ENCODE measurements at regions of chr17 and their contacts with region 1.

Region 1: DNA sequence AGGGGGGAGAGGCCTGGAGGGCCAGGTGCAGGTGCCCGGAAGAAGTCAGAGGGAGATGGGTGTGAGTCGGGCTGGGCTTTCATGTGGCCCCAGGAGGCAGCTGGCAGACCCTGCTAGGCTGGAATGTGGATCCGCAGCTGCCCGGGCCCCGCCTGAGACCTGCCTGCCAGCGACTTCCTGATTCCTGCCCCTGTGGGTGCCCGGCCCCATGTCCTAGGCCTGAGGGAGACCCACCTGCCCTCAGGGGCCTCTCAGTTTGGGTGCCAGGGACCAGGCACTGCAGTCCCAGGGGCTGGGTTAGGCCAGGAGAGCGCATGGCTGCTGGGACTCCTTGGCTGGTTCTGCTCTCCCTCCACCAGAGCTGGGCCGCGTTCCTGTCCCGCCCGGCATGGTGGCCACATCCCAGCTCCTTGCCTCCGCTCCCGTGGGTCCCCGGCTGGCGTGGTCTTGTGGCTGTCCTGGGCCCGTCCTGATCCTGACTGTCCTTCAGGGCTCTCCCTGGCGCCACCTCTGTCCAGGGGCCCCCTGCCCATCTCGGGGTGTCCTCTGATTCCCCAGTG is 22.1 kb upstream of the SPNS2 start:
- DNase-seq: peak; percentile 92 to 96
- H3K4me3 ChIP-seq: peak overlapping the region; percentile 49; the same call in 1 of the 2 replicates
- H3K27ac ChIP-seq: peak overlapping the region; percentile 93
- H3K4me1 ChIP-seq: peaks cover 70% of the 10 kb centered on the region
- H3K27me3 ChIP-seq: no peaks in the 10 kb centered on the region
- CTCF ChIP-seq: no peak

Region 2: GRCh38 chr17:3886776-3887175 is 589.8 kb before region 1 on chr17:
- CTCF ChIA-PET with region 1: no interaction called
- POLR2A ChIA-PET with region 1: no interaction called
- intact Hi-C with region 1: no loop called
- DNase-seq: no peak
- H3K4me3 ChIP-seq: no peak overlapping the region
- H3K27ac ChIP-seq: no peak overlapping the region
- H3K4me1 ChIP-seq: peaks cover 61% of the 10 kb centered on the region
- H3K27me3 ChIP-seq: no peaks in the 10 kb centered on the region
- CTCF ChIP-seq: no peak

Region 3: GRCh38 chr17:4236456-4236855 is 240.1 kb before region 1 on chr17:
- CTCF ChIA-PET with region 1: no interaction called
- POLR2A ChIA-PET with region 1: no interaction called
- intact Hi-C with region 1: no loop called
- DNase-seq: no peak
- H3K4me3 ChIP-seq: no peak overlapping the region
- H3K27ac ChIP-seq: no peak overlapping the region
- H3K4me1 ChIP-seq: no peaks in the 10 kb centered on the region
- H3K27me3 ChIP-seq: no peaks in the 10 kb centered on the region
- CTCF ChIP-seq: no peak

Region 4: DNA sequence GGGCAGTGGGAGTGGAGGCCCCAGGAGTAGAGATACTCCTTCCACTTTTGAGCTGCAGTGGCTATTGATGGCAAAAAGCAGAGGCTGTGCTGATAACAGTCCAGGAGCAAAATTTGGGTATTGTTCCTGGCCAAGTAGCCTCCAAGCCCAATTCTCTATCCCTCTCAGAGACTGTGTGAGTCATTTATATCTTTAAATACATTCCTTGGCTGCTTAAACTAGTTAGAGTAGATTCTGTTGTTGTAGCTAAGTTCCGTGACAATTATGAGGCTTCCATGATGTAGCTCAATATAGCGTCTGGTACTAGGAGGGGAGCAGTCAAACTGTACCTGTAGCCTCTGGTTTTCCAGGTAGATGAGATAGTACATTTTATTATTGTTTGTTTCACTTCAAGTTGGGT is 90.2 kb before region 1 on chr17:
- CTCF ChIA-PET with region 1: no interaction called
- POLR2A ChIA-PET with region 1: no interaction called
- intact Hi-C with region 1: no loop called
- DNase-seq: no peak
- H3K4me3 ChIP-seq: no peak overlapping the region
- H3K27ac ChIP-seq: no peak overlapping the region
- H3K4me1 ChIP-seq: peaks cover 12% of the 10 kb centered on the region
- H3K27me3 ChIP-seq: no peaks in the 10 kb centered on the region
- CTCF ChIP-seq: no peak

Region 5: GRCh38 chr17:4426499-4427208 is 49.9 kb before region 1 on chr17:
- CTCF ChIA-PET with region 1: interaction called, 22 read pairs
- POLR2A ChIA-PET with region 1: no interaction called
- intact Hi-C with region 1: loop called (anchors 2 kb)
- DNase-seq: no peak
- H3K4me3 ChIP-seq: no peak overlapping the region
- H3K27ac ChIP-seq: peak overlapping the region; percentile 50
- H3K4me1 ChIP-seq: 0 out of 2 replicates have a peak, but pooled peaks cover 8% of the 10 kb centered on the region
- H3K27me3 ChIP-seq: no peaks in the 10 kb centered on the region
- CTCF ChIP-seq: no peak

Region 6: DNA sequence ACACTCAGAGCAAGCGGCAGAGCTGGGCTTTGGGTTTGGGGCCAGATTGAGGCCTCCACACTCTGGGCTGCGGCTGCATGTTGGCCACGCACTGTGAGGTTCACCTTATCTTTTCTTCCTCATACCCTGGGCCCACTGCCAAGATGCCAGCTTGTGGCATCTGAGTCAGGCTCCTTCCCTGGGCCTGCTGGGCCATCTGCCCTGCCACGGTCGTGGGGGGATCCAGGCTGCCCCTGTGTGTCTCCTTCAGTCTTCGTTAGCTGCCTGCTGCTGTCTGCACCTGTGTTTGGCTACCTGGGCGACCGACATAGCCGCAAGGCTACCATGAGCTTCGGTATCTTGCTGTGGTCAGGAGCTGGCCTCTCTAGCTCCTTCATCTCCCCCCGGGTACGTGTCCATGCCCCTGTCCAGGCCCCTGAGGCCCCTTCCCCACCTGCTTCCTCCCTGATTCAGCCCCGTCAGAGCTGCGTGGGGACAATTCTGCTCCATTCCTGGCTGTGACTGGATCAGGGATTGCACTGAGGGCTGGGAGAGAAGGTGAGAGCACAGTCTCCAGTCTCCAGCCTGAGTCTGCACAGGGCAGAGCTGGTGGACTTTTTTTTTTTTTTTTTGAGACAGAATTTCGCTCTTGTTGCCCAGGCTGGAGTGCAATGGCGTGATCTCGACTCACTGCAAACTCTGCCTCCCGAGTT is 31.7 kb before region 1 on chr17:
- CTCF ChIA-PET with region 1: no interaction called
- POLR2A ChIA-PET with region 1: interaction called, 4 read pairs
- intact Hi-C with region 1: loop called (anchors 1 kb)
- DNase-seq: peak; percentile 79 to 90
- H3K4me3 ChIP-seq: no peak overlapping the region
- H3K27ac ChIP-seq: no peak overlapping the region
- H3K4me1 ChIP-seq: peaks cover 27% of the 10 kb centered on the region
- H3K27me3 ChIP-seq: no peaks in the 10 kb centered on the region
- CTCF ChIP-seq: no peak

Region 7: GRCh38 chr17:4513995-4514605 is 37.5 kb after region 1 on chr17:
- CTCF ChIA-PET with region 1: no interaction called
- POLR2A ChIA-PET with region 1: no interaction called
- intact Hi-C with region 1: loop called (anchors 1 kb)
- DNase-seq: peak; percentile 92 to 93
- H3K4me3 ChIP-seq: peak overlapping the region; percentile 47; the same call in 1 of the 2 replicates
- H3K27ac ChIP-seq: peak overlapping the region; percentile 100
- H3K4me1 ChIP-seq: peaks cover 79% of the 10 kb centered on the region
- H3K27me3 ChIP-seq: no peaks in the 10 kb centered on the region
- CTCF ChIP-seq: no peak

Region 8: GRCh38 chr17:4520894-4521600 is 44.5 kb after region 1 on chr17:
- CTCF ChIA-PET with region 1: no interaction called
- POLR2A ChIA-PET with region 1: interaction called, 5 read pairs
- intact Hi-C with region 1: loop called (anchors 1 kb)
- DNase-seq: peak; percentile 89 to 93
- H3K4me3 ChIP-seq: no peak overlapping the region
- H3K27ac ChIP-seq: peak overlapping the region; percentile 87
- H3K4me1 ChIP-seq: peaks cover 54% of the 10 kb centered on the region
- H3K27me3 ChIP-seq: no peaks in the 10 kb centered on the region
- CTCF ChIP-seq: no peak

Region 9: DNA sequence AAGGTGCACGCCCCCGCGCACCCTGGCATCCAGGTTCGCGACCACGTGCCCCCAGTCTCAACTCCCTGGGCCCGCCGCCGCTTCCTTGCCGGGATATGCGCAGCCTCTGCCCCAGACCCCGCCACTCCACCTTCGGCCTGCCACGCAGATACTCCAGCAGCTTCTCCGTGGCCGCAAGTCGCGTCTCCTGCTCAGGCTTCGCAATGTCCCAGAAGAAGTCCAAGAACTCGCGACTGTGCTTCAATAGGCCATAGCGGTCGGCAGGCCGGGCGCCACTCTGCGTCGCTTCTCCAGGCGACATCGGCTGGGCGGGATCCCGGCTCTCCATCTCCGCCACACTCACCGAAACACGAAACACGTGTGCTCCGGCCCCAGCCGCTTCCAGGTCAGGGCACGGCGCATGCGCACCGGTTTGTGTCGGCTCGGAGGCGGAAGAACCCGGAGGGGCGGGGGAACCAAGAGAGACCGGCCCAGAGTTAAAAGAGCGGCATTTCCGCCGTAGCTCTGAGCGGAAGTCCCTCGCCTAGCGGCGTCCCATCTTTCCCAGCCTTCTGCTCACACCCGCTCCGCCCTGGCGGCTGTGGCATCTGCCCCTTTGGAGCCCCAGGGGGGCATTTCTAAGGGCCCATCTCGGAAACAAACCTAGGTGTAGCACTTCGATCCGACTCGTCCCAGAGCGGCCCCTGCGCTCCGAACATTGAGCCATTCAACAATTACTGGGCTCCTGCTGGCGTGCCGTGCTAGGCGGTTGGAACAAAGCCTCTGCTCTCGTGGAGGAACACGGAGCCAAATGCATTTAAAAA is 78.6 kb after region 1 on chr17 and contains the start of gene MYBBP1A:
- CTCF ChIA-PET with region 1: no interaction called
- POLR2A ChIA-PET with region 1: interaction called, 3 read pairs
- intact Hi-C with region 1: loop called (anchors 2 kb)
- DNase-seq: peak; percentile 90 to 97
- H3K4me3 ChIP-seq: peak within 1 kb of the TSS; percentile 94
- H3K27ac ChIP-seq: peak within 1 kb of the TSS; percentile 23
- H3K4me1 ChIP-seq: peaks cover 15% of the 10 kb centered on the region
- H3K27me3 ChIP-seq: no peaks in the 10 kb centered on the region
- CTCF ChIP-seq: 0 out of 2 replicates have a peak, but pooled peaks have one; percentile 26
- total RNA-seq, gene MYBBP1A: 76.3 and 89.1 TPM in 2 replicates

Measured in PC-9 (cell line).